IMR-90 (cell line): ENCODE measurements at regions of chr3 and their contacts with region 1.

Region 1: DNA sequence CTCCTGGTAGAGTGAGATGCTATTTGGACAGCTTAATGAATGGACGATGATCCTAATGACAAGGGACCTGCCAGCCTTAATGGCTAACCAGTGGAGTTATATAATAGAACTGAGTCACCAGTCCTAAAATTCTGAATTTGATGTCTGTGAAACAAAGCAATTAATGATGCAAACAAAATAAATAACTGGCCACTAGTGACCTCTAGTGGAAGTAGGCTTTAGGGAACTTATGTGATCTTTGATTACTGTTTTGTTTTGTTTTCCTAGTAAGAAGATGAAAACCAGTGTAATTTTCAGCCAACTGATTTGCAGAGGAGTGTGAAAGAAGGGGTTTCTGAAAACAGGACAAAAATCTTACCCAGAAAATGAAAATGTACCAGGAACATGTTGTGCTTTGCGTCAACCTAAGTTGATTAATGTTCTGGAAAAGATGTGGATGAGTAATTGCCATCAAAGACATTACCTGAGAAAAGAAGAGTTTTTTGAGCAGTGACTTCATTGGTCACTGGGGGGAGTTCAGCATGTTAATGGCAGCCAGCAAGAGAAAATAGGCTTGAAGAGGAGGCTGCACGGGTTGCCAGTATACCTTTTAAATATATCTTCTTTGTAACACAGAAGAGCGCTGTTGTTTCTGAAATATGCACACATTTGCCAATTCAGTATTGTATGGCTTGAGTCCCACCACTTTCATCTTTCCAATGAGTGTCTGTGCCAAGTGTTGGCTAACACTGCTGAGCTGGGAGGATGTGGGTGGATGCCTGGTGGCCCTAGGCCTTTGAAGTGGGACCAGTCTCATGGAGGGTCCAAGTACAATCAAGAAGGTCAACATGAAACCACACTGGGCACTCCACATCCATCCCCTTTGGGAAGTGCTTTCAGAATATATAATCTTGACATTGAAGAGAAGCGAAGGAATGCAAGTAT is 9.3 kb downstream of the VEPH1 start:
- DNase-seq: peak; percentile 71
- ATAC-seq: peak; percentile 46
- H3K4me3 ChIP-seq: no peak overlapping the region
- H3K27ac ChIP-seq: no peak overlapping the region
- H3K4me1 ChIP-seq: peaks cover 13% of the 10 kb centered on the region
- H3K27me3 ChIP-seq: no peaks in the 10 kb centered on the region
- CTCF ChIP-seq: peak; percentile 80
- POLR2A ChIP-seq: no peak
- RAD21 ChIP-seq: peak; percentile 68

Region 2: DNA sequence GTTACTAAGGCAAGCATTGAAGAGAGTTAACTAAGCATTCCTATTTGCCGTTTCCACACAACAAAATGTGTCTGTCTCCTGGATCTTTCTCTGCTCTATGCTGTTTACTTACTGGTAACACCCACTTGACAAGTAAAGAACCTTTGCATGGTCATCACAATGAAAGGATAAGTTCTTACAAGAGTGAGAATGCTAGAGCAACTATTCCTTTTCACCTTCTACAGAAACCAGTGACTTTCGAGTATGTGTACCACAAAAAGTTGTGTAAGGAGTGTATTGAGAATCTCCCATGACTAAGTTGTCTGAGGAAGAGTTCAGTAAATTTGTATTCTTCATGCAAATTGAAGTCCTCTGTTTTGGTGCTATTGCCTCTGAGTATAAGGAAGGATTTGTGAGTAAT is 808.7 kb before region 1 on chr3:
- CTCF ChIA-PET with region 1: no interaction called
- POLR2A ChIA-PET with region 1: no interaction called
- dilution Hi-C with region 1: no loop called
- in situ Hi-C with region 1: no loop called
- intact Hi-C with region 1: no loop called
- DNase-seq: peak; percentile 53
- ATAC-seq: peak; percentile 28
- H3K4me3 ChIP-seq: no peak overlapping the region
- H3K27ac ChIP-seq: peak overlapping the region; percentile 19; the same call in 1 of the 2 replicates
- H3K4me1 ChIP-seq: peaks cover 29% of the 10 kb centered on the region
- H3K27me3 ChIP-seq: no peaks in the 10 kb centered on the region
- CTCF ChIP-seq: no peak
- POLR2A ChIP-seq: no peak; the same call in 1 of the 2 replicates
- RAD21 ChIP-seq: no peak

Region 3: DNA sequence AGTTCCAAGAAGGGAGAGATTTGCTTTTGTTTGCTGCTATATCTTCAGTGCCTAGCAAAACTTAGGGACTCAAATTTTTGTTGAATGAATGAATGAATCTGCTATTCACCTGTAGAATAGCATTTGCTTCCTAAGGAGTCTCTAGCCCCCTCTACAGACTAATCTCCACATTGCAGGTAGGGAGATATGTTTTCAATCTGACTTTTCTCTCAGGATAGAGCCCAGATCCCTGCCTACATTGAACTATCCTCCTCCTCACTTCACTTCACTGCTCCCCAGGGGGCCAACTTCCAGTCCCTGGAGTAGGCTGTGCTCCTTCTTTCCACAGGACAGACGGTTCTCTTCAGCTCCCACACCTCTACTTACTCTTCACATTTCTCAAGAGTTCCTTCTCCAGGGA is 139.2 kb before region 1 on chr3:
- CTCF ChIA-PET with region 1: no interaction called
- POLR2A ChIA-PET with region 1: no interaction called
- dilution Hi-C with region 1: no loop called
- in situ Hi-C with region 1: no loop called
- intact Hi-C with region 1: loop called (anchors 10 kb)
- DNase-seq: peak; percentile 18
- ATAC-seq: 0 out of 2 replicates have a peak, but pooled peaks have one; percentile 22
- H3K4me3 ChIP-seq: no peak overlapping the region
- H3K27ac ChIP-seq: no peak overlapping the region
- H3K4me1 ChIP-seq: peaks cover 2% of the 10 kb centered on the region; the same call in 1 of the 2 replicates
- H3K27me3 ChIP-seq: no peaks in the 10 kb centered on the region
- CTCF ChIP-seq: peak; percentile 52
- POLR2A ChIP-seq: no peak
- RAD21 ChIP-seq: peak; percentile 50

Region 4: DNA sequence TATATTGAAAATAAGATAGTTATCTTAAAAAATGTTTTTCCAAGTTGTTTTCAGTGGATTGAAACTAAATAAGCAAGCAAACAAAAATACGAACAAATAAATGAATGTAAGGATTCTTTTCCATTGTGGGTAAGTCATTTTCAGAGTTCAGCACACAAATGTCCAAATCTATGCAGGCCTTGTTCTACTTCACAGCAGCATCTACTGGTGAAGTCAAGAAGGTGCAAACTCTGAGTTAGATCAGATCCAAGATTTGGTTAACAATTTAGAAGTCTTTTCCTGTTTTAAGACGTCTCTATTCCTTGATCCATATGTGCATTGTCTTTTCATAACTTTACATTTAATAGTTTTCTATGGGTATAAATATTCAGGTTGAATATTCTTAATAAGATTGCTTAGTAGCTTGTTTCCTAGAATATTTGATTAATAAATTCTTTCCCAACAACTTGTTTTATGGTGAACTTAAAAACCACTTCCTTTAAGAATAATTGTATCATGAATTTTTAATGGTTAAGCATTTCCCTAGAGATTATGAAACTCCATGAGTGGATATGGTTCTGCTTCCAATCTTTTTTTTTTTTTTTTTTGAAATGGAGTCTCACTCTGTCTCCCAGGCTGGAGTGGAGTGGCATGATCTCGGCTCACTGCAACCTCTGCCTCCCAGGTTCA is 46.7 kb before region 1 on chr3:
- CTCF ChIA-PET with region 1: interaction called, 4 read pairs
- POLR2A ChIA-PET with region 1: interaction called, 3 read pairs
- dilution Hi-C with region 1: no loop called
- in situ Hi-C with region 1: no loop called
- intact Hi-C with region 1: loop called (anchors 1 kb)
- DNase-seq: peak; percentile 70
- ATAC-seq: peak; percentile 56; the same call in 1 of the 2 replicates
- H3K4me3 ChIP-seq: no peak overlapping the region
- H3K27ac ChIP-seq: no peak overlapping the region
- H3K4me1 ChIP-seq: peaks cover 10% of the 10 kb centered on the region
- H3K27me3 ChIP-seq: no peaks in the 10 kb centered on the region
- CTCF ChIP-seq: peak; percentile 68
- POLR2A ChIP-seq: no peak
- RAD21 ChIP-seq: peak; percentile 73